ENCODE measurements at regions of chr19 and their contacts with region 1.

Region 1: DNA sequence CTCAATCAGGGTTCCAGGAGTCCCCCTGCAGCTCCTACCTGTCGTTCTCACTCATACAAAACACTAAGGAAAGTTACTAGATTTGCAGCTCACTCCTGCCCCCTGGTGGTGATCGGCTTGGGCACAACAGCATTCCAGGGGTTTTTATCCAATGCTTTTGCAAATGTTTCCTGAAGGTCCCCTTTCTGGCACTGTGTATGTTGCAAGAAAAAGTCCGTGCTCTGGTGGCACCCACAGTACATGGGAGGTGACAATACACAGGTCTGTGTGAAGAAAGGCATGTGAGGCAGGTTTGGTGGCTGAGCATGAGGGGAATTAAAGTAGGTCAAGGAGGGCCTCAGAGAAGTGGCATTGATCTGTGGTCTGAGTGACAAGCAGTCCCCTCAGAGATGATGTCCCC is 8.6 kb upstream of the TYK2 start:
- DNase-seq: peak; percentile 88 to 94 (median 92)
- ATAC-seq: peak; percentile 79
- H3K4me3 ChIP-seq: no peak overlapping the region
- H3K27ac ChIP-seq: no peak overlapping the region
- H3K4me1 ChIP-seq: no peaks in the 10 kb centered on the region
- H3K27me3 ChIP-seq: no peaks in the 10 kb centered on the region
- CTCF ChIP-seq: peak; percentile 86 to 95 (median 89)
- POLR2A ChIP-seq: no peak

Region 2: GRCh38 chr19:10173257-10173926 is 215.6 kb before region 1 on chr19:
- intact Hi-C with region 1: no loop called
- DNase-seq: no peak
- ATAC-seq: no peak
- H3K4me3 ChIP-seq: no peak overlapping the region
- H3K27ac ChIP-seq: no peak overlapping the region
- H3K4me1 ChIP-seq: no peaks in the 10 kb centered on the region
- H3K27me3 ChIP-seq: no peaks in the 10 kb centered on the region
- CTCF ChIP-seq: no peak
- POLR2A ChIP-seq: no peak

Region 3: GRCh38 chr19:10259162-10259905 is 129.6 kb before region 1 on chr19:
- intact Hi-C with region 1: loop called (anchors 5 kb)
- DNase-seq: peak; percentile 87 to 94 (median 91)
- ATAC-seq: peak; percentile 72
- H3K4me3 ChIP-seq: no peak overlapping the region
- H3K27ac ChIP-seq: no peak overlapping the region
- H3K4me1 ChIP-seq: peaks cover 3% of the 10 kb centered on the region
- H3K27me3 ChIP-seq: no peaks in the 10 kb centered on the region
- CTCF ChIP-seq: peak; percentile 46 to 83 (median 55)
- POLR2A ChIP-seq: no peak

Region 4: GRCh38 chr19:10269333-10270179 is 119.4 kb before region 1 on chr19:
- intact Hi-C with region 1: loop called (anchors 2 kb)
- DNase-seq: peak; percentile 78 to 84 (median 80)
- ATAC-seq: peak; percentile 71
- H3K4me3 ChIP-seq: no peak overlapping the region
- H3K27ac ChIP-seq: peak overlapping the region in 3 of 4 donors; percentile 10 to 85 (median 75)
- H3K4me1 ChIP-seq: peaks cover 23% of the 10 kb centered on the region
- H3K27me3 ChIP-seq: peaks cover 0 to 10% of the 10 kb centered on the region in 2 donors
- CTCF ChIP-seq: peak; percentile 79 to 95 (median 93)
- POLR2A ChIP-seq: no peak

Region 5: GRCh38 chr19:10431943-10432735 is 43.2 kb after region 1 on chr19:
- intact Hi-C with region 1: no loop called
- DNase-seq: peak; percentile 64 to 76 (median 68)
- ATAC-seq: peak; percentile 66
- H3K4me3 ChIP-seq: peak overlapping the region; percentile 11 to 50
- H3K27ac ChIP-seq: peak overlapping the region; percentile 69 to 85 (median 78)
- H3K4me1 ChIP-seq: peaks cover 37% of the 10 kb centered on the region
- H3K27me3 ChIP-seq: no peaks in the 10 kb centered on the region
- CTCF ChIP-seq: no peak
- POLR2A ChIP-seq: peak in 1 of 3 donors; percentile 8

Measured in body of pancreas (tissue), 4 donors.